Endothelial cell of umbilical vein (primary cell): ENCODE measurements at regions of chrX and their contacts with region 1.

Region 1: DNA sequence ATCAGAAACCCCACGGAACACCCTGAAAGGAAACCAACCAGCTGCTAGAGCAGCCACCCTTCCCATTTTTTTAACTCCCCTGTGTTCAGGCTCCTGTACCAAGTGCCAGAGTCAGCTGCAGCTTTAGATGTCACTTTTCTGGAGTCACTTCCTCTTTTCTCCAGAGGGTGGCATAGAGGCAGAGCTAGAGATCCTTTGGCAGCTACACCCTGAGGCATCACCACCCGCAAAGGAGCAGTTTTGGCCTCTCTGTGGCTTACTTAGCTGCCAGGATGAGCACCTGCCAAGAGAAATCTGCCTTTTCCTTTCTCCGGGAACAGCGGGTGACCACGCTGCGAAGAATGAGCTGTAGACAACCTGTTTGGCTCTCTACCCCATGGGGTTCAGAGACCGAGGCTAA is 58.0 kb upstream of the CHRDL1 start:
- DNase-seq: no peak
- H3K4me3 ChIP-seq: no peak overlapping the region
- H3K27ac ChIP-seq: no peak overlapping the region
- H3K4me1 ChIP-seq: no peaks in the 10 kb centered on the region
- H3K27me3 ChIP-seq: no peaks in the 10 kb centered on the region
- CTCF ChIP-seq: no peak
- POLR2A ChIP-seq: no peak

Region 2: GRCh38 chrX:110450050-110450449 is 403.6 kb before region 1 on chrX:
- CTCF ChIA-PET with region 1: interaction called, 5 read pairs
- POLR2A ChIA-PET with region 1: no interaction called
- dilution Hi-C with region 1: no loop called
- intact Hi-C with region 1: loop called (anchors 1 kb)
- DNase-seq: peak; percentile 56
- H3K4me3 ChIP-seq: no peak overlapping the region
- H3K27ac ChIP-seq: no peak overlapping the region
- H3K4me1 ChIP-seq: no peaks in the 10 kb centered on the region
- H3K27me3 ChIP-seq: peaks cover 3 to 5% of the 10 kb centered on the region in 2 experiments
- CTCF ChIP-seq: peak; percentile 49 to 58
- POLR2A ChIP-seq: no peak

Region 3: GRCh38 chrX:110519906-110520452 is 333.6 kb before region 1 on chrX:
- CTCF ChIA-PET with region 1: no interaction called
- POLR2A ChIA-PET with region 1: no interaction called
- dilution Hi-C with region 1: no loop called
- intact Hi-C with region 1: no loop called
- DNase-seq: no peak
- H3K4me3 ChIP-seq: no peak overlapping the region
- H3K27ac ChIP-seq: no peak overlapping the region
- H3K4me1 ChIP-seq: no peaks in the 10 kb centered on the region
- H3K27me3 ChIP-seq: no peaks in the 10 kb centered on the region
- CTCF ChIP-seq: no peak
- POLR2A ChIP-seq: no peak

Region 4: DNA sequence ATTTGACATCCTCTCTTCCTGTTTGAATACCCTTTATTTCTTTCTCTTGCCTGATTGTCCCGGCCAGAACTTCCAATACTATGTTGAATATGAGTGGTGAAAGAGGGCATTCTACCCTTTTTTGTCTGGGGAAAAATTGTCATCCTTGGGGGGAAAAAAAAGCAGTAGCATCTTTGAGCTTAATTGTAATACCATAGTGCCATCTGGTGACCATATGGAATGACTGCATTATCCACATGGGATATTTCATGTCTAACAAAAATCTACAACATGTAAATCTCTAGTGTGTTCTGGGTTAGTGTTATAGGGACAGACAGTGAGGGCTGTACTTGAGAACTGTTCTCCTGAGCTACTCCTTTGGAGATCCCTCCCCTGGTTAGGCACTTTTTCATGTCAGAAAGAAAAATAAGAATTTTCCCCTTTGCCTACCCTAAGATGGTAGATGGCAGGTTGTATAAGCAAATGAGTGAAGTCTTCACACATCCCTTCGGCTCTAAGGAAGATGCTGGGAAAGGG is 390.7 kb after region 1 on chrX:
- CTCF ChIA-PET with region 1: no interaction called
- POLR2A ChIA-PET with region 1: no interaction called
- dilution Hi-C with region 1: no loop called
- intact Hi-C with region 1: loop called (anchors 10 kb)
- DNase-seq: no peak
- H3K4me3 ChIP-seq: no peak overlapping the region
- H3K27ac ChIP-seq: no peak overlapping the region
- H3K4me1 ChIP-seq: no peaks in the 10 kb centered on the region
- H3K27me3 ChIP-seq: no peaks in the 10 kb centered on the region
- CTCF ChIP-seq: no peak
- POLR2A ChIP-seq: no peak

Region 5: DNA sequence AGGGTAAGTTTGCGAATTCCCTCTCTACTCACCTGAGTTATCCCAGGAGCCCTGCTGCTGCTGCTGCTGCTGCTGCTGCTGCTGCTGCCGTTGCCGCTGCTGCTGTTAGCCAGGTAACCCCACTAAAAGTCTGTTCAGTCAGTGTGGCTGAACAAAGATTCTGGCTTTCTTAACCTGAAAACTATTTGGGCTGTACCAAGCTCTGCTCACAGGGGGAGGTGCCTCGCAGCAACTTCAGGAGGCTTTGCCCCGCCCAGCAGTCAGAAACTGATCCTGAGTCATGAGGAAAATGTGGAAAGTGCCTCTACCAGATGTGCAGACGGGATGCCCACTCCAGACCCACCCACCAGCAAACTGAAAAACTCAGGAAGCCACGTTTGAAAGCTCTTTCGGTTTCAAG is 416.7 kb after region 1 on chrX and contains the start of gene CAPN6:
- CTCF ChIA-PET with region 1: no interaction called
- POLR2A ChIA-PET with region 1: no interaction called
- dilution Hi-C with region 1: no loop called
- intact Hi-C with region 1: no loop called
- DNase-seq: no peak
- H3K4me3 ChIP-seq: no peak within 1 kb of the TSS
- H3K27ac ChIP-seq: no peak within 1 kb of the TSS
- H3K4me1 ChIP-seq: no peaks in the 10 kb centered on the region
- H3K27me3 ChIP-seq: no peaks in the 10 kb centered on the region
- CTCF ChIP-seq: no peak
- POLR2A ChIP-seq: no peak
- total RNA-seq, gene CAPN6: not detected in 2 replicates